ENCODE measurements at regions of chr1 and their contacts with region 1.

Region 1: GRCh38 chr1:89358287-89358893 is 5.5 kb upstream of the GBP6 start:
- DNase-seq: peak; percentile 93
- ATAC-seq: peak; percentile 81
- H3K4me3 Mint-ChIP-seq: peak overlapping the region; percentile 65
- H3K27ac Mint-ChIP-seq: peak overlapping the region; percentile 94
- H3K4me1 Mint-ChIP-seq: peaks cover 45% of the 10 kb centered on the region
- H3K27me3 Mint-ChIP-seq: no peaks in the 10 kb centered on the region
- CTCF ChIP-seq: peak; percentile 92

Region 2: DNA sequence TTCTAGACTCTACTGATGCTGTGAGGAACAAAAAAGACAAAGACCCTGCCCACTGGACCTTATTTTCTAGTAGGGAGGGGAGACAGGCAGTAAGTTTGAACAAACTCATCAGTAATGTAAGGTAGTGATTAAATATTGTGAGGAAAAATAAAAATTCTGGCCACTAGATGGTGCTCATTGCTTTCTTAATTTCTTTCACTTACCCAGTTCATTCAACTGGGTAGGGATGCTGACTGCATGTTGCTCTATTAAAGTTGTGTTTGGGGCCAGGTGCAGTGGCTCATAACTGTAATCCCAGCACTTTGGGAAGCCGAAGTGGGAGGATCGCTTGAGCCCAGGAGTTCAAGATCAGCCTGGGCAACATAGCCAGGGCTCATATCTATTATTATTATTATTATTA is 359.7 kb before region 1 on chr1:
- CTCF ChIA-PET with region 1: interaction called, 24 read pairs
- POLR2A ChIA-PET with region 1: no interaction called
- intact Hi-C with region 1: loop called (anchors 2 kb)
- DNase-seq: peak; percentile 29
- ATAC-seq: peak; percentile 87
- H3K4me3 Mint-ChIP-seq: no peak overlapping the region
- H3K27ac Mint-ChIP-seq: no peak overlapping the region
- H3K4me1 Mint-ChIP-seq: peaks cover 36% of the 10 kb centered on the region
- H3K27me3 Mint-ChIP-seq: no peaks in the 10 kb centered on the region
- CTCF ChIP-seq: peak; percentile 60

Region 3: DNA sequence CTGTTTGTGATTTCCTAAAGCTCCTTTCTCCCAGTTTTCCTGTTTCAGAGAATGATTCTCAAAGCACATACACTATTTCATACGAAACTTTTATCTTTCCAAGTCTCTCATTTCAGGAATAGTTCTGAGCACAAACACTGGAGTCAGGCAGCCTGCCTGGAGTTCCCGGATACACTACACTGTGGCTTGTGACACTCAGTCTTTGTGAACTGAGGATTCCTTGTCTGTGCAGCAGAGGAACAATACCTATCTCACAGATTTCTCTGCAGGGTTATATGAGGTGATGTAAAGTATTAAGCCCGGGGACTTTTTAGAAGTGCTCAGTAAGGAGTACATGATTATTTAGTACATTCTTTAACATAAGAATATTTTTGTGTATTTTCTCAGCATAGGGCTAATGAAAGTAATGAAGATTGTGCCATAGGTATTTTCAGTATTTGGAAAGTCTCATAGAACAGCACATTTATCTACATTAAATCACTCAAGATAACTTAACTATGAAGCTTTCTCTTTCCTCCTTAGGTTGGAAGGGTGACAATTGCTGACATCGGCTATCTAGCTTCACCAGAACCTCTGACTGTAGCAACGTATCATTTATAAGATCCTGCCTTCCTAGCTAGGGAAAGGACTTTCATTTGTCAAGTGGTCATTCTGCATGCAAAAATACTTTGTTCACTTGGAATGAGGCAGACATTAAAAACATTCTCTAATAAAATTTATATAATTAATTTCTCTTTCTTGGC is 245.3 kb before region 1 on chr1:
- CTCF ChIA-PET with region 1: interaction called, 16 read pairs
- POLR2A ChIA-PET with region 1: no interaction called
- intact Hi-C with region 1: no loop called
- DNase-seq: no peak
- ATAC-seq: no peak
- H3K4me3 Mint-ChIP-seq: no peak overlapping the region
- H3K27ac Mint-ChIP-seq: peak overlapping the region; percentile 4
- H3K4me1 Mint-ChIP-seq: peaks cover 46% of the 10 kb centered on the region
- H3K27me3 Mint-ChIP-seq: no peaks in the 10 kb centered on the region
- CTCF ChIP-seq: no peak

Region 4: DNA sequence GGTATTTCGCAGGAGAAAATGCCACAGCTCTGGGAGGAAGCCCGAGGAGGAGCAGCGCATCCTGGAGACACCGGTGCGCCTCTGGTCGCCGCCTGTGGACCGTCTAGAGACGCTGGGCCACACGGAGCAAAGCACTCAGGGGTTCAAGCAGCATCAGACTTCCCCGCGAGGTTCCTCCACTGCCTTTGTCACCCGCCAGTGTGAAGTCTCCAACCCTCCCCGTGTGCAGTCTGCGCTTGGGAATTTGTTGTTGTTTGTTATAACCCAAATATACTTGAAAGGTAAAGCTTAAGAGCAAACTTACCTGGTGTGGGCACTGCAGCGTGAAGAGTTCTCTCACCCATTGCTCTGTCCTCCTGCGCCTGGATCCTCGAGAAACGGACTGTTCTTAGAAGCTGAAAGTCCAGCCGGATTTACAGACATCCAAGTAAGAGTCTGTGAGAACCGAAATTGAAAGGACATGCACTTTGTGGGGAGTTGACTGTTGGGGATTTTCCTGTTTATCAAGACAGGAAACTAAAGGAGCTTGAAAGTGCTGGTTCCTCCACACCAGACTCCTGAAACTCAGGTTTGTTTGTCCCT is 159.8 kb before region 1 on chr1 and contains the start of gene GBP4:
- CTCF ChIA-PET with region 1: interaction called, 9 read pairs
- POLR2A ChIA-PET with region 1: interaction called, 9 read pairs
- intact Hi-C with region 1: loop called (anchors 2 kb)
- DNase-seq: peak; percentile 61
- ATAC-seq: peak; percentile 58
- H3K4me3 Mint-ChIP-seq: peak within 1 kb of the TSS; percentile 92
- H3K27ac Mint-ChIP-seq: peak within 1 kb of the TSS; percentile 97
- H3K4me1 Mint-ChIP-seq: peaks cover 76% of the 10 kb centered on the region
- H3K27me3 Mint-ChIP-seq: no peaks in the 10 kb centered on the region
- CTCF ChIP-seq: no peak
- total RNA-seq, gene GBP4: 34.2 to 38.3 TPM

Region 5: DNA sequence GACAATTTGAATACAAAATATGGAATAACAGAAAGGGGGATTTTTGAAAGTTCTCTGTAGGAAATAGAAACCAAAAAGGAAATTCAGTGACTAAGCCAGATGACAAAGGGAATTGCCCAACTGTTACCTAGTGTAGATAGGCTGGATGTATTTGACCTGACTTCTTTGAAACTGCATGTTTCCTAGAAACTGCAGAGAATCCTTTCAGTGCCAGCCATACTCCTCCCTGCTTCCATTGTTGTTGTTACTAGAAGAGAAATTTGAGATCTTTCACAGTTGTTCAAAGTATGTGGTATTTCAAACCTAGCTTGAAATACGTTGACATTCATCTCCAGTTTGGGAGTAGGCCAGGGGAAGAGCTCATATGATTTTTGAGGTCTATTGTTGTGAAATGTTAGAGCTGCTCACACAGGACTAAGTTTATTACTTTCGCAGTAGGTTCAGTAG is 84.0 kb before region 1 on chr1:
- CTCF ChIA-PET with region 1: interaction called, 102 read pairs
- POLR2A ChIA-PET with region 1: interaction called, 16 read pairs
- intact Hi-C with region 1: loop called (anchors 5 kb)
- DNase-seq: peak; percentile 33
- ATAC-seq: peak; percentile 56
- H3K4me3 Mint-ChIP-seq: peak overlapping the region; percentile 100
- H3K27ac Mint-ChIP-seq: peak overlapping the region; percentile 100
- H3K4me1 Mint-ChIP-seq: peaks cover 56% of the 10 kb centered on the region
- H3K27me3 Mint-ChIP-seq: no peaks in the 10 kb centered on the region
- CTCF ChIP-seq: no peak

Region 6: GRCh38 chr1:89454845-89455521 is 96.6 kb after region 1 on chr1:
- CTCF ChIA-PET with region 1: interaction called, 13 read pairs
- POLR2A ChIA-PET with region 1: interaction called, 4 read pairs
- intact Hi-C with region 1: loop called (anchors 5 kb)
- DNase-seq: peak; percentile 79
- ATAC-seq: peak; percentile 64
- H3K4me3 Mint-ChIP-seq: no peak overlapping the region
- H3K27ac Mint-ChIP-seq: no peak overlapping the region
- H3K4me1 Mint-ChIP-seq: peaks cover 29% of the 10 kb centered on the region
- H3K27me3 Mint-ChIP-seq: peaks cover 21% of the 10 kb centered on the region
- CTCF ChIP-seq: peak; percentile 90